Activated CD4-positive, alpha-beta T cell treated with anti-CD3 and anti-CD28 coated beads for 36 hours (primary cell): ENCODE measurements at regions of chr1 and their contacts with region 1.

Region 1: DNA sequence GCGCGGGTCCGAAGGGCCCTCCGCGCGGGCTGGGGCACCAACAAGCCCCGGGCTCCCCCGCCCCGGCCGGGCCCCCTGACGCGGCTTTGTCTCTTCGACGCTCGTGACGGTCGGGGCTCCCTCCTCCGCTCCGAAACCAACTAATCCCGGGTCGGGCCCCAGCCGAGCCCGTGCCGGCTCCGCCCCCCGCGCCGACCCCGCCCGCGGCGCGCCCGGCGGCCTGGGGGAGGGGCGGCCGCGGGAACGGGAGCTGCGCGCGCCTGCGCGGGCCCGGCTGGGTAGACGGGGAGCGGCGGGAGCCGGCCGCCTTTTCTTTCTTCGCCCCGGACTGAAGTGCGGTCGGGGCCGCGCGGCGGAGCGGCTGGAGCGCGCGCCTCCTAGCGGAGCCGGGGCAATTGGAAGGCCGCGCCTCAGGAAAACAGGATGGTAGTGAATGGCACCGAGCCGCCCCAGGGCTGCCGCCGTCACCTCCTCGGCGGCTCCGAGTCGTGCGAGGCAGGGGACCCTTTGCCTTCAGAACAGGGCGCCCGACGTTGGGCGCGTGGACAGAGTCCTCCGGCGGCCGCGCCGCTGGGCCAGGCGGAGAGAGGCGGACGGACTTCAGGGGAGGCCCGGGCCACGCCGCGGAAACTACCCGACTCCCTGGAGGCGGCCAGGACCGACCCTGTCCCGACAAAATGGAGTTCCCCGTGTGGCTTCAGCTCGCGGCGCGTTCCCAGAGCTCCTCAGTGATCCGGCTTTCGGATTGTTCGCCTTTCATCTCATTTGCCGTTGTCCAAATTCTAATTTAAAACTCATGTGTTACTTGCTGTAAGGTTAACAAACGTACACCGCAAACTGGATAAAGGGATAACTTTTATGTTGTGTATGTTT is at the start of gene TP53BP2:
- DNase-seq: peak; percentile 91
- ATAC-seq: peak; percentile 75
- H3K4me3 Mint-ChIP-seq: peak within 1 kb of the TSS; percentile 96
- H3K27ac Mint-ChIP-seq: peak within 1 kb of the TSS; percentile 99
- H3K4me1 Mint-ChIP-seq: peaks cover 44% of the 10 kb centered on the region
- H3K27me3 Mint-ChIP-seq: no peaks in the 10 kb centered on the region
- total RNA-seq, gene TP53BP2: 46.6 to 56.2 TPM

Region 2: DNA sequence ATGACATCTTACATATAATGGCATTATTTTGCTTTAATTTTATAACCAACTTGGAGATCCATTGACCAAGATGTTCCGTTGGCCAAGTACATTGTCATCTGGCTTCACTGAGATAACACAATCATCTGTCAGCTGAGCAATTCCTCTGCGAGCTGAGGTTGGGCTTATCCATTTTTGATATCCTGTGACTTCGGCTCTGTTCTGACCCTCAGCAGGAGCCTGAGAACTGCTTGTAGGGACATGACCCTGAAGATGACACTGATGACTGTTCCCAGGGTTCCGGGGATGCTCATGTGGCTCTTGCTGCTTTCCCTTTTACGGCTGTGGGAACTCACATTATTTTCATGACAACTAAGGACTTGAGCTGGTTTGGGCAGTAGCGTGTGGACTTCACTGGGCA is 754.1 kb before region 1 on chr1:
- CTCF ChIA-PET with region 1: no interaction called
- POLR2A ChIA-PET with region 1: no interaction called
- intact Hi-C with region 1: no loop called
- DNase-seq: no peak
- ATAC-seq: no peak
- H3K4me3 Mint-ChIP-seq: no peak overlapping the region
- H3K27ac Mint-ChIP-seq: no peak overlapping the region
- H3K4me1 Mint-ChIP-seq: peaks cover 8% of the 10 kb centered on the region
- H3K27me3 Mint-ChIP-seq: no peaks in the 10 kb centered on the region

Region 3: GRCh38 chr1:223142795-223143536 is 703.1 kb before region 1 on chr1 and contains the start of gene TLR5:
- CTCF ChIA-PET with region 1: no interaction called
- POLR2A ChIA-PET with region 1: no interaction called
- intact Hi-C with region 1: loop called in 1 of 2 experiments (anchors 10 kb)
- DNase-seq: peak; percentile 93
- ATAC-seq: peak; percentile 89
- H3K4me3 Mint-ChIP-seq: peak within 1 kb of the TSS; percentile 69
- H3K27ac Mint-ChIP-seq: peak within 1 kb of the TSS; percentile 79
- H3K4me1 Mint-ChIP-seq: peaks cover 30% of the 10 kb centered on the region
- H3K27me3 Mint-ChIP-seq: peaks cover 2% of the 10 kb centered on the region
- total RNA-seq, gene TLR5: 0.21 to 0.56 TPM

Region 4: DNA sequence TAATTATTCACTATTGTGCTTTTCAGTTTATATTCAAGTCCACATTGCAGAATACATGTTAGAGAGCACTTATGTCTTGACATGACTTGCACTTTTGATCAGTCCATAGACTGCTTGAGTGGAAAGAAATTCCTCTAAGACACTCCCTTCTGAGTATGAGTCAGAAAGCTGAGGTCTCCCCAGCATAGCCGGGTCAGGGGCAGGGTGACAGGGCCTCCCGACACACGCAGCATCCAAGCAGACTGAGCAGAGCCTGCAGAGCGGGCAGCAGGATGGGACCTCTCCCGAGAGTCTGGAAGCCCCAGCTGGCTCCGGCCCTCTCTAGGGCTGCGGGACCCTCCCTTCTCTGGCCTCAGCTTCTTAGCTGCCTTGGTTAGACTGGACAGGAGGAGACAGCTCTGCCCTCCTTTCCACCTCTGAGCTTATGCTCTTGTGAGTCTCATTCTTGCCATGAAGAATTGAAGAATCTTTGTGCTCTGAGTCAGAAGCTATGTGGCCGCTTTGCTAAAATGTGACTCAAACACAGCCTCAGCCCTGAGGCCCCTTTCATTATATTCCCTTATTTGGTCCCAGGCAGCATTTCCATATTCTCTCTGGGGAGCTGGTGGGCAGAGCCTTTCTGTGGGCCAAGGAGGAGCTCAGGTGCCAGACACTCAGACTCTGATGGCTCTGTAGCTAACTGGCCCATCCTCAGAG is 145.0 kb before region 1 on chr1:
- CTCF ChIA-PET with region 1: interaction called, 3 read pairs
- POLR2A ChIA-PET with region 1: interaction called, 5 read pairs
- intact Hi-C with region 1: loop called in 1 of 2 experiments (anchors 5 kb)
- DNase-seq: peak; percentile 59
- ATAC-seq: peak; percentile 75
- H3K4me3 Mint-ChIP-seq: no peak overlapping the region
- H3K27ac Mint-ChIP-seq: peak overlapping the region; percentile 55
- H3K4me1 Mint-ChIP-seq: peaks cover 34% of the 10 kb centered on the region
- H3K27me3 Mint-ChIP-seq: peaks cover 4% of the 10 kb centered on the region

Region 5: GRCh38 chr1:223811634-223812415 is 34.2 kb before region 1 on chr1:
- CTCF ChIA-PET with region 1: interaction called, 7 read pairs
- POLR2A ChIA-PET with region 1: interaction called, 3 read pairs
- intact Hi-C with region 1: loop called (anchors 1 kb)
- DNase-seq: no peak
- ATAC-seq: peak; percentile 53
- H3K4me3 Mint-ChIP-seq: no peak overlapping the region
- H3K27ac Mint-ChIP-seq: no peak overlapping the region
- H3K4me1 Mint-ChIP-seq: peaks cover 33% of the 10 kb centered on the region
- H3K27me3 Mint-ChIP-seq: no peaks in the 10 kb centered on the region

Region 6: GRCh38 chr1:224182866-224183590 is 337.0 kb after region 1 on chr1 and contains the start of gene DEGS1:
- CTCF ChIA-PET with region 1: no interaction called
- POLR2A ChIA-PET with region 1: interaction called, 4 read pairs
- intact Hi-C with region 1: loop called in 1 of 2 experiments (anchors 1 kb)
- DNase-seq: peak; percentile 91
- ATAC-seq: peak; percentile 77
- H3K4me3 Mint-ChIP-seq: peak within 1 kb of the TSS; percentile 82
- H3K27ac Mint-ChIP-seq: peak within 1 kb of the TSS; percentile 95
- H3K4me1 Mint-ChIP-seq: peaks cover 45% of the 10 kb centered on the region
- H3K27me3 Mint-ChIP-seq: peaks cover 5% of the 10 kb centered on the region
- total RNA-seq, gene DEGS1: 24.0 to 24.5 TPM

Region 7: DNA sequence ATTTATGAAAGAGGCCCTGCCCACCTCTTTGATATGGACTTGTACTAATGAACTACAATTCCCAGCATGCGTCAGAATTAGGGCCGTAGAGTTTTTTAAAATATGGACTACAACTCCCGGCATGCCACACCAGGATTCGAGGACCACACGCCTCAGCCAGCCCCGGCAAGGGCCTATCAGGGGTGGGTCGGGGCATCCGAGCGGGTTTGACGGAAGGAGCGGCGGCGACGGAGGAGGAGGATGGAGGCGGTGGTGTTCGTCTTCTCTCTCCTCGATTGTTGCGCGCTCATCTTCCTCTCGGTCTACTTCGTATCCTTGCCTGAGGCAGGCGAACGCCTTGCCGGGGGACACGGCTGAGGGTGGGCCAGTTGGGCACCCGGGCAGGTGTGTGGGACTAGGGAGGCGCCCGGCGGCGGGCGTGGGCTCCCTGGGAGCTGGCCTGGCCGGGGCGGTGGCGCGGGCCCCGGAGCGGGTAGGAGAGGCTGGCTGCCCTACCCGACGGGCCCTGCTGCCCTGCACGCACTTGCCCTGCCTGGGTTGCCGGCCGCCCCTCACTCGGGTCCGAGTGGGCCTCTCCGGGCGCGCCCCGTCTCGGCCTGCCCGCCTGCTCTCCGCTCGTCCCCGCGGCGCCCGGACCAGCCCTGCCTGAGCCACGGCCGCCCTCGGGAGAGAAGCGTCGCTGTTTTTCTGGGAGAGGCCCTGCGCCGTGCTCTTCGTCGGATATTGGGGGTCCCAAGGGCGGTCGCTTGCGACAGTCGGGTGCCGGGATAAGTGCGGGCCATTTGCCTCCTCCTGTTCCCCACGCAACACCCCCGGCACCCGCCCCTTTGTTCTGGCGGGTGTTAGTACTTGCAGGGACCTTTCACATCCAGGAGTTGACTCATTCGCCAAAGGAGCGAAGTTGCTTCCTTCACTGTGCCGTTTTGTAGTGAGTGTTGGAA is 510.9 kb after region 1 on chr1 and contains the start of gene CNIH4:
- CTCF ChIA-PET with region 1: no interaction called
- POLR2A ChIA-PET with region 1: no interaction called
- intact Hi-C with region 1: loop called in 1 of 2 experiments (anchors 5 kb)
- DNase-seq: peak; percentile 95
- ATAC-seq: peak; percentile 98
- H3K4me3 Mint-ChIP-seq: peak within 1 kb of the TSS; percentile 80
- H3K27ac Mint-ChIP-seq: peak within 1 kb of the TSS; percentile 89
- H3K4me1 Mint-ChIP-seq: peaks cover 30% of the 10 kb centered on the region
- H3K27me3 Mint-ChIP-seq: no peaks in the 10 kb centered on the region
- total RNA-seq, gene CNIH4: 29.9 to 49.6 TPM

Region 8: GRCh38 chr1:224497714-224498573 is 651.9 kb after region 1 on chr1:
- CTCF ChIA-PET with region 1: no interaction called
- POLR2A ChIA-PET with region 1: no interaction called
- intact Hi-C with region 1: loop called in 1 of 2 experiments (anchors 10 kb)
- DNase-seq: peak; percentile 88
- ATAC-seq: peak; percentile 97
- H3K4me3 Mint-ChIP-seq: peak overlapping the region; percentile 44
- H3K27ac Mint-ChIP-seq: peak overlapping the region; percentile 96
- H3K4me1 Mint-ChIP-seq: peaks cover 42% of the 10 kb centered on the region
- H3K27me3 Mint-ChIP-seq: no peaks in the 10 kb centered on the region